Panc1 (cell line): ENCODE measurements at regions of chr20 and their contacts with region 1.

Region 1: GRCh38 chr20:41268917-41269652 is 48.4 kb downstream of the ZHX3 start:
- DNase-seq: no peak
- ATAC-seq: no peak
- H3K4me3 ChIP-seq: no peak overlapping the region
- H3K27ac ChIP-seq: no peak overlapping the region
- H3K4me1 ChIP-seq: no peaks in the 10 kb centered on the region
- H3K27me3 ChIP-seq: no peaks in the 10 kb centered on the region
- CTCF ChIP-seq: no peak

Region 2: GRCh38 chr20:41483553-41483930 is 214.5 kb after region 1 on chr20:
- CTCF ChIA-PET with region 1: interaction called, 10 read pairs
- POLR2A ChIA-PET with region 1: no interaction called
- in situ Hi-C with region 1: no loop called
- intact Hi-C with region 1: no loop called
- DNase-seq: no peak
- ATAC-seq: 0 out of 2 replicates have a peak, but pooled peaks have one; percentile 30
- H3K4me3 ChIP-seq: no peak overlapping the region
- H3K27ac ChIP-seq: no peak overlapping the region; the same call in 1 of the 2 replicates
- H3K4me1 ChIP-seq: peaks cover 7% of the 10 kb centered on the region
- H3K27me3 ChIP-seq: no peaks in the 10 kb centered on the region
- CTCF ChIP-seq: no peak

Region 3: DNA sequence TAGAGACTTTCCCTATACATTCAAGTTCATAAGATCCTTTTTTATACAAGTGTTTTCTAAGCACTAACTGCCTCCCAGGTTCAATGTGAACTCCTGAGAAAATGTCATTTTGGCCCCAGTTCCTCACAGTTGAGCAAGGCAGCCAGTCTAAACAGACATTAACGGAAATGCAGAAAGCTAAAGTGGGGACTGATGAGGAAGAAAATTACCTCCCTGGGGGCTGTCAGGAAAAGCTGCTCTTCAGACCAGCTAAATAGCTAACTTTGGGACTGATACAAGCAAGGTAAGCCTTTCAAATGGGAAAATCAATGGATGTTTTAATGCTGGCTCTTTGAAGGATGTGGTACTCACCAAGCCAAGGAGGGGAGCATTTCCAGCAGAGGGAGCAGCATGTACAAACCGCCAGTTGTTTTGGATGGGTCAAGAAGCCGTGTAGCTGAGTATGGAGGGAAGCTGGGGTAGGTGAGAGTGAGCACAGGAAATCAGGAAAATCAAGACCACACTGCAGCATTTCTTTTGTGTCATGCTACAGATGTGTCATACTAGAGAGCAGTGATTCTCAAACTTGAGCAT is 529.9 kb after region 1 on chr20:
- CTCF ChIA-PET with region 1: interaction called, 12 read pairs
- POLR2A ChIA-PET with region 1: no interaction called
- in situ Hi-C with region 1: no loop called
- intact Hi-C with region 1: no loop called
- DNase-seq: no peak
- ATAC-seq: no peak
- H3K4me3 ChIP-seq: no peak overlapping the region
- H3K27ac ChIP-seq: no peak overlapping the region
- H3K4me1 ChIP-seq: no peaks in the 10 kb centered on the region
- H3K27me3 ChIP-seq: no peaks in the 10 kb centered on the region; the same call in 1 of the 2 replicates
- CTCF ChIP-seq: no peak

Region 4: DNA sequence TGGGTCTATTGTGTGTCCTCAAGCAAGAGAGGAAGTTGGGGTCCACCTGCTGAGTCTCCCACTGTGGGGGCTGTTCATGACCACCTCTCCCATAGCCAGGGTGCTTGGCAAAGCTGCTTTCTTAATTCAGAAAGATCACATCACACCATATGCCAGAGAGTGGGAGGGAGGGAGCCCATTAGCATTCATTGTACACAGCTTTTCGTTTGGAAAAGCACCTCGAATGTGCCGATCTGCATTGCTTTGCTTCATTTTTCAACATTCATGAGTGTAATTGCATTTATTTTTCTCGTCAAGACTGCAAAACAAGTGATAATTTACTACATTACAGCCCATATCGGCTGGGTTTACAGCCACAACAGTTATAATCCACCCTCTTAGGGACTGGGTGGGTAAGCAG is 1593.4 kb after region 1 on chr20:
- CTCF ChIA-PET with region 1: no interaction called
- POLR2A ChIA-PET with region 1: interaction called, 15 read pairs
- in situ Hi-C with region 1: no loop called
- intact Hi-C with region 1: no loop called
- DNase-seq: no peak
- ATAC-seq: no peak
- H3K4me3 ChIP-seq: no peak overlapping the region
- H3K27ac ChIP-seq: no peak overlapping the region
- H3K4me1 ChIP-seq: no peaks in the 10 kb centered on the region
- H3K27me3 ChIP-seq: no peaks in the 10 kb centered on the region
- CTCF ChIP-seq: no peak